ENCODE measurements at regions of chr12 and their contacts with region 1.

Region 1: GRCh38 chr12:68420225-68421010 is 88.3 kb upstream of the MDM1 start:
- DNase-seq: no peak
- ATAC-seq: no peak
- H3K4me3 ChIP-seq: no peak overlapping the region
- H3K27ac ChIP-seq: no peak overlapping the region
- H3K4me1 ChIP-seq: no peaks in the 10 kb centered on the region
- H3K27me3 ChIP-seq: no peaks in the 10 kb centered on the region
- CTCF ChIP-seq: no peak
- EP300 ChIP-seq: no peak
- POLR2A ChIP-seq: no peak
- RAD21 ChIP-seq: no peak

Region 2: DNA sequence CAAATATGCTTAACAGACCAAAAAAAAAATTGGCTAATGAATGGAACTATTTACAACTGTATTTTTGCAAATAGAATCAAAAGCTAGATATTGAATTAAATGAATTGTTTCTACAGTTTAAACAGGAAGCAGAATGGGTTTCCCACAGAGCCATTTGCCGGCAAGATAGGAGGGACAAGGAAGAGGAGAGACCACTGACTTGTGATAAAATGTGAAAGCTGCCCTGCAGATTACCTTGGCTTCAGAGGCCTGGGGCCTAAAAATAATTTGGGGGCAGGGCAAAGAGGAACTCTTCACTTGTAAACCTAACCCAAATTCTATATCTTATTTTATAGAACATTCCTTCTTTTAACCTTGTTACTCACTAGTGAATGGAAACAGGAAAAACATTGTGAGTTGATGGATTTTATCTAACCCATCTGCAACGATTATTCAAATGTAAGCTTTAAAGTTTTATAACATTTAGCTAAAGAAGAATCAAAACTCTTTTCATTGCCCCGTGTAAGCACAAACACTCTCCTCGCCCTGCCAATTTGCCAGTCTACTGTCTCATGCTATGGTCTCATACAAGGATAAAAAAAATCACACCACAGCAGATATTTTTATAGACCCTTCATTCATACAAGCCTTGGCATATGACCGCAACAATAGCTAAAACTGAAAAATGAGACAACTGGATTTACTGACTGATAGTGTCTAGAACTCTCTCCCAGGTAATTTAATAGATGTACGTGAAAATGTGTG is 38.8 kb before region 1 on chr12:
- CTCF ChIA-PET with region 1: interaction called, 3 read pairs
- POLR2A ChIA-PET with region 1: interaction called, 8 read pairs
- RAD21 ChIA-PET with region 1: interaction called, 6 read pairs
- SMC1A ChIA-PET with region 1: interaction called, 42 read pairs
- in situ Hi-C with region 1: no loop called
- intact Hi-C with region 1: no loop called
- DNase-seq: no peak
- ATAC-seq: no peak
- H3K4me3 ChIP-seq: no peak overlapping the region
- H3K27ac ChIP-seq: no peak overlapping the region
- H3K4me1 ChIP-seq: peaks cover 2% of the 10 kb centered on the region; the same call in 1 of the 2 replicates
- H3K27me3 ChIP-seq: no peaks in the 10 kb centered on the region
- CTCF ChIP-seq: no peak
- EP300 ChIP-seq: no peak
- POLR2A ChIP-seq: no peak
- RAD21 ChIP-seq: no peak

Region 3: GRCh38 chr12:68393417-68393816 is 27.0 kb before region 1 on chr12:
- CTCF ChIA-PET with region 1: interaction called, 3 read pairs
- POLR2A ChIA-PET with region 1: interaction called, 3 read pairs
- RAD21 ChIA-PET with region 1: interaction called, 4 read pairs
- SMC1A ChIA-PET with region 1: interaction called, 14 read pairs
- in situ Hi-C with region 1: no loop called
- intact Hi-C with region 1: no loop called
- DNase-seq: no peak
- ATAC-seq: no peak
- H3K4me3 ChIP-seq: no peak overlapping the region
- H3K27ac ChIP-seq: no peak overlapping the region
- H3K4me1 ChIP-seq: no peaks in the 10 kb centered on the region
- H3K27me3 ChIP-seq: no peaks in the 10 kb centered on the region
- CTCF ChIP-seq: no peak
- EP300 ChIP-seq: no peak
- POLR2A ChIP-seq: no peak
- RAD21 ChIP-seq: no peak

Region 4: GRCh38 chr12:68406134-68406594 is 14.3 kb before region 1 on chr12:
- CTCF ChIA-PET with region 1: interaction called, 8 read pairs
- POLR2A ChIA-PET with region 1: no interaction called
- RAD21 ChIA-PET with region 1: interaction called, 3 read pairs
- SMC1A ChIA-PET with region 1: interaction called, 16 read pairs
- in situ Hi-C with region 1: no loop called
- intact Hi-C with region 1: no loop called
- DNase-seq: no peak
- ATAC-seq: no peak
- H3K4me3 ChIP-seq: no peak overlapping the region
- H3K27ac ChIP-seq: no peak overlapping the region
- H3K4me1 ChIP-seq: no peaks in the 10 kb centered on the region
- H3K27me3 ChIP-seq: no peaks in the 10 kb centered on the region
- CTCF ChIP-seq: no peak
- EP300 ChIP-seq: no peak
- POLR2A ChIP-seq: no peak
- RAD21 ChIP-seq: no peak

Measured in GM12878 (cell line).